Activated CD4-positive, alpha-beta T cell treated with anti-CD3 and anti-CD28 coated beads for 36 hours (primary cell): ENCODE measurements at regions of chr11 and their contacts with region 1.

Region 1: DNA sequence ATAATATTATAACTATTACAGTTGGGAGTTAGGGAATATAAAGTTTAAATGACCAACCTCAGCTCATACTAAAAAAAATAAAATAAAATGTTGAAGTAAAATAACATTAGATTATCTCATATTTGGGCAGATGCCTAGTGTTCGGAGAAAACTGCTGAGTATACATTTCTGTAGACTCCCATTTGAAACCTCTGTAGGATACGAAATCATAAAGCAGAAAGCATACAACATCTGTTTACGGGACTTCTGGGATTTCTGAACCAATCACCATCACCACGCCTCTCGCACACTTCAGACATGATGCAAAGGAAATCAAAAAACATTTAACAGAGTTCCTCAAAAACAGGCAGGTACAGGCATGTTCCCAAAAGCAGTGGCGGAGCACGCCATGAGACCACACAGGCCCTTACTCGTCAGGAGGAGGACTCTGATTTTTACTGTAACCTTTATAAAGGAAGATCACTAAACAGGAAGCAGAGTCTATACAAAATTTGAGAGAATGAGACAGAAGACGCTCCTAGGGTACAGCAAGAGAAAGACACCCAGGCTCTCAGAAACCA is 8.6 kb downstream of the ZNF195 start:
- DNase-seq: no peak
- ATAC-seq: no peak
- H3K4me3 Mint-ChIP-seq: no peak overlapping the region
- H3K27ac Mint-ChIP-seq: no peak overlapping the region
- H3K4me1 Mint-ChIP-seq: peaks cover 16% of the 10 kb centered on the region
- H3K27me3 Mint-ChIP-seq: no peaks in the 10 kb centered on the region

Region 2: GRCh38 chr11:3341298-3341697 is 29.1 kb before region 1 on chr11:
- CTCF ChIA-PET with region 1: interaction called, 6 read pairs
- POLR2A ChIA-PET with region 1: no interaction called
- intact Hi-C with region 1: loop called in 1 of 2 experiments (anchors 2 kb)
- DNase-seq: peak; percentile 87
- ATAC-seq: peak; percentile 36
- H3K4me3 Mint-ChIP-seq: no peak overlapping the region
- H3K27ac Mint-ChIP-seq: no peak overlapping the region
- H3K4me1 Mint-ChIP-seq: peaks cover 5% of the 10 kb centered on the region
- H3K27me3 Mint-ChIP-seq: peaks cover 26% of the 10 kb centered on the region